AG04450 (cell line): ENCODE measurements at regions of chr5 and their contacts with region 1.

Region 1: GRCh38 chr5:137091472-137091871 is 407.7 kb downstream of the SPOCK1 start:
- DNase-seq: no peak
- H3K4me3 ChIP-seq: no peak overlapping the region
- H3K27ac ChIP-seq: no peak overlapping the region
- H3K27me3 ChIP-seq: no peaks in the 10 kb centered on the region
- CTCF ChIP-seq: no peak

Region 2: DNA sequence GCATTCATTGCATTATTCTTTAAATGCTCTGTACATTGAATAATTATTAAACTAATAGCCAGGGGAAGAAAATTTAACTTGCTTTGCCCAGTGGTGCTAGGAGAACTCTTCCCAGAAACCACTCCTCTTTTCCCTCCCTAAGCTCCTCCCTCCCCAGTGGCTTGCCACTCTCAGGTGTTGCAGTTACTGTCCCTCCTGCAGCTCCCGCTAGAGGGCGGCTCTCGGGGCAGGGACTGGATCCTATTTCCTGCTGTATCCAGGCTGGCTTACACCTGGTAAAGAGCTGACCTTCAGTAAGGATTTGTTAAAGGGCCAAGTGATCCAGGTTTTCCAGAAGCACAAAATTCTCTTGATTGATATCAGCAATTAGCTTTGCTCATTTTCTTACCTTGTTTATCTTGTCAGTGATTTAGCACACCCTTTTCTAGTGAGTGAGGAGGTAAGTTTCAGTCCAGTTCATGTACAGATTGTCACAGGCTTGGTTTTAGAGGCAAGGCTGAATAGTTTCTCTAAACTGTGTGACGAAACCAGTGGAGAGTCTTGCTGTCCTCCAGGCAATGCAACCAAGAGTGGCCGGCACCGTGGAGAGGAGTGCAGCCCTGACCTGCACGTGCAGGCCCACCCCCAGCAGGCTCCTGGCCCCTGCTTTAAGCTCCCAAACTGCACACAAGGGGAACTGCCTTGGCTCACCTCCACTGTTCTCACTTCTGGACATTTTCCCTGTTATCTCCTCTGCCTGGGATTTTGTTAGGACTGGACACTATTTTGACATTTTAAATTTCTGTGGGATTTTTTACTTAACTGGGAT is 16.1 kb before region 1 on chr5:
- CTCF ChIA-PET with region 1: interaction called, 11 read pairs
- POLR2A ChIA-PET with region 1: interaction called, 13 read pairs
- DNase-seq: no peak
- H3K4me3 ChIP-seq: no peak overlapping the region
- H3K27ac ChIP-seq: no peak overlapping the region
- H3K27me3 ChIP-seq: no peaks in the 10 kb centered on the region
- CTCF ChIP-seq: peak; percentile 57